Upper lobe of right lung (tissue), 1 donor: ENCODE measurements at regions of chr4 and their contacts with region 1.

Region 1: DNA sequence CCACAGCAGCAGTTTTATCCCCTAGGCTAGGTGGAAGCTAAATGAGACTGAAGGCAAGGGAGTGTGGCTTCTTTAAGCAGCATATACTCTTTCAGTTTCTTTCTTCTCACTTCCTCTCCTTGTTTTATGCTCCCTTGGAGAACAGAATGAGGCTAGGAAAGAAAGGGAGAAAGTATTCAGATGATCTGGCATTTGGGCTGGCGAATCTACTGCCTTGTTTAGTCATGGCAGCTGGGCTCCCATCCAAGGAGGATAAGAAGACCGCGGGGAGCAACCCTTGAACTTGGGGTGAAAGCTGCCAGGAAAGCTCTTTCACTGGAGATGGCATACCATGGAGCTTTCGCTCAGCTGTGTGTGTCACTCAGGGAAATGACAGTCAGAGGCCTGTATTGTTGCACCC is 72.1 kb downstream of the ARHGEF38 start:
- DNase-seq: no peak
- ATAC-seq: peak; percentile 19
- H3K4me3 ChIP-seq: no peak overlapping the region
- H3K27ac ChIP-seq: no peak overlapping the region
- H3K4me1 ChIP-seq: peaks cover 1% of the 10 kb centered on the region
- H3K27me3 ChIP-seq: no peaks in the 10 kb centered on the region
- CTCF ChIP-seq: no peak

Region 2: DNA sequence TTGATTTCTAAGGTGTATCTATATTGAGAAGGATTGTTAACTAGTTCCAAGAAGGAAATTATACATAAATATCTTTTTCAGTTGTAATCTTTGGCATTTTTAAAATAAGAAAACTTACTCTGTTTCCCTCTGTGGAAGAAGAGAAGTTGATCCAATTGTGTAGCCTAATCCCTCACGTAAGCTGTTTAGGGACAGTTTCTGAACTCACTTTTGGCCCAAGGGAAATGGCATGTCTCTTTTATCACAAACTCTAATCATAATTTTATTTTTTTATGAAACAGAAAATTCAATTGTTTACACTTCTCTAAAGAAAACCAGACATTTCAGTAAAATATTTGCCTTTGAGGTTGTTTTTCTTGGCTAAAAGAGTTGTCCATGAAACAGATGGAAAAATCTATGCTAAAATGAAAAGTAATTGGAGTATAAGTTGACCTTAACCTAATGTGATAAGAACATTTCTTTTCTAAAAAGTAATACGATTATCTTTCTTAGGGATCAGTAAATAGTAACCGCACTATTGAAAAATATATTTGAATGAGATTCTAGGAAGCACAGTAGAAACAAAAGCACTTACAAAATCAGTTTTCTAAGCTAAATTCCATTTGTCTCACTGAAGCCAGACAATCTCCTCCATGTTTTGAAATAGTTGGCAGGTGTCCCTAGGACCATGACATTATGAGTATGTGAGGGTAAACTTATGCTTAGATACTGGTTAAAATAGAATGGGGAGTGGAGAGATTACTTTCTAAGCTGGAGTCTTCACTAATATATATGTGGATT is 498.2 kb before region 1 on chr4:
- intact Hi-C with region 1: loop called (anchors 5 kb)
- DNase-seq: no peak
- ATAC-seq: no peak
- H3K4me3 ChIP-seq: no peak overlapping the region
- H3K27ac ChIP-seq: no peak overlapping the region
- H3K4me1 ChIP-seq: no peaks in the 10 kb centered on the region
- H3K27me3 ChIP-seq: no peaks in the 10 kb centered on the region
- CTCF ChIP-seq: no peak

Region 3: GRCh38 chr4:105496899-105497298 is 127.6 kb before region 1 on chr4:
- intact Hi-C with region 1: no loop called
- DNase-seq: no peak
- ATAC-seq: peak; percentile 46
- H3K4me3 ChIP-seq: no peak overlapping the region
- H3K27ac ChIP-seq: no peak overlapping the region
- H3K4me1 ChIP-seq: no peaks in the 10 kb centered on the region
- H3K27me3 ChIP-seq: no peaks in the 10 kb centered on the region
- CTCF ChIP-seq: peak; percentile 23

Region 4: DNA sequence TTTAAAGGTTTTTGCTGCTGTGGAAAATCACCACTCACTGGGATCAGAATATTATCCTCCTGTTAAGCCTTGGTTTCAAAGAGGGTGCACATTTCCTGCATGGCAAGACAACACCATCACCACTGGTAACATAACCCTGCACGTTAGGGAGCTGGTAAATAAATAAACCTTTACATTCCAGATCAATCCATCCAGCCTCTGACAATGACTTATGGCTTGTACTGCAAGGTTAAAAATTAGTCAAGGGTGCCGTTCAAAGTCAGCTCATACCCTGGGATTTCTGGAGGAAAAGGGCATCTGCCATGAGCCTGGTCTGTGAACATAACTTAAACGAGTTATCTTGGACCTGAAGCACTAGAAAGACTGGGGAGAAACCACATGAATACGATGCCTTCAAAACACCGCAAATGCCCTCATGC is 373.6 kb after region 1 on chr4:
- intact Hi-C with region 1: no loop called
- DNase-seq: no peak
- ATAC-seq: no peak
- H3K4me3 ChIP-seq: no peak overlapping the region
- H3K27ac ChIP-seq: no peak overlapping the region
- H3K4me1 ChIP-seq: no peaks in the 10 kb centered on the region
- H3K27me3 ChIP-seq: no peaks in the 10 kb centered on the region
- CTCF ChIP-seq: no peak